ENCODE measurements at regions of chrX and their contacts with region 1.

Region 1: DNA sequence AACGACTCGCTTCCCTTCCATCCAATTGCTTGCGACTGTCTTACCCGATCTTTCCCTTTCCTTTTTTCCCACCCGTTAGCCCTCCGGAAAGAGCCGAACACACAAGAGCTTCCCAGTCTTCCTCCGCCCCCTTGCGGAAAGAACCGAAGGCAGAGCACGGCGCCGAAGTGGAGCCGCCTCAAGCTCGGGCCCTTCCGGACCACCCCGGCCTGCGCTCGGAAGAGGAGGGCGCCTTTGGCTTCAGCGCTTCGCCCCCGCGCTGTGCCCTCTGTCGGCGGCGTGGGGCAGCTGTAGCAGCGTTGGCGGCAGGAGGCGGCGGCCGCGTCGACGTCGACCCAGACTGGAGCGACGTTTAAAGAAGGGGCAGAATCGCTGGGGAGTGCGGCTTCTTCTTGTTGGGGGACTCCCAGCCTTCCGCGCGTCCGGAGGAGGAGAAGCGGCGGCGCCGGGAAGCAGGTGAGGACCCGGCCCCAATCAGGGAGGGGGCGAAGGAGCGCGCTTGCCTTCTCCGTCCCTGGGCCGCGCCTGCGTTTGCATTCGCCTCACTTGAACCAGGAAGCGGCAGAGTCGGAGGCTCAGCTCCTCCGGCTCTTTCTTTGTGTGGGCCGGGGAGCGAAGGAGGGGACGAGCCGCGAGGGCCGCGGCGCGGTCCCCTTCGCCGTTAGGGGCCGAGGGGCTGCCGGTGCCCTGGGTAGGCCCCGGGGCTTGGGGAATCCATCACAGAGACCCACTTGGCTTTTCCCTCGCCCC is at the start of gene ZBTB33:
- DNase-seq: peak; percentile 97

Region 2: DNA sequence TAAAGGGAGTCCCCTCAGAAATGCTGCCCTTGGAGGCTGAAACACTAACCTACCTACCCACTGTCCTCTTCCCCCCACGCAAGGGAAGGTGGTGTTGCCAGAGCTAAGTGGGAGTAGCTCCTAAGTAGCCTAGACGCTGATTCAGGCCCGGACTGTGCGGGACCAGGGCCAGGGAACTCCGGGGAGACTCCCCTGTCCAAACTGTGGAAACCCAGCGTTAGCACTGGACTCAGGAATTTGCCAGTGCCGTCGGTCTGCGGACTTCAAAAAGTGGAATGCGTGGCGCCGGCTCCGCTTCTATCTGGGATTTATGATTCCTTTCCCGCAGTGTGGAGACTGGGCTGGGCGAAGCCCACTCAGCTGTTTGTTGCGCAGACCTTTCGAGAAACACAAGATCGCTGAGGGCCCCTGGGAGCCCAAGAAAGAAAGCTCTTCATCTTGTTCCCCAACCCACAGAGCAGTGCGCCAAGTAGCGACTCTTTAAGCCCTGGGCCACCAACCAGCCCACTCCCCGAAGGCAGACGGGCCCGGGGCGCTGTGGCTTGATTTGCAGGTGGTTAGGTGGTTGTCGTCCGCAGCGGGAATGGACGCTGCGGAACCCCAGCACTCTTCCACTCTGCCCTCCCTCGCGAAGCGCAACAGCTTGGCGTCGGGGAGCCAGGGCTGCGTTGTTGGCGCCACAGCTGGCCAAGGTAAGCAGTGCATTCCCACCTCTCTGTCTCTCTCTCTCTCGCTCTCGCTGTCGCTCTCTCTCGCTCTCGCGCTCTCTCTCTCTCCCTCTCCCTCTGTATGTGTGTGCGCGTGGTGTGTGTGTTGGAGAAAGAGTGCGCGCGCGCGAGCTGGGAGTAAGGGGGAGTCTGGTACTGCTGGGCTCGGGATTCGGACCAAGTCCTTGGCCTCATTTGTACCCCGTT is 58.5 kb after region 1 on chrX:
- CTCF ChIA-PET with region 1: interaction called, 3 read pairs
- POLR2A ChIA-PET with region 1: interaction called, 12 read pairs
- DNase-seq: peak; percentile 72

Region 3: GRCh38 chrX:120751683-120752082 is 501.0 kb after region 1 on chrX:
- CTCF ChIA-PET with region 1: interaction called, 11 read pairs
- POLR2A ChIA-PET with region 1: no interaction called
- DNase-seq: no peak